Activated CD4-positive, alpha-beta T cell treated with anti-CD3 and anti-CD28 coated beads for 36 hours (primary cell): ENCODE measurements at regions of chr4 and their contacts with region 1.

Region 1: GRCh38 chr4:184514121-184514988 is 40.0 kb upstream of the IRF2 start:
- DNase-seq: peak; percentile 89
- ATAC-seq: peak; percentile 91
- H3K4me3 Mint-ChIP-seq: peak overlapping the region; percentile 51
- H3K27ac Mint-ChIP-seq: peak overlapping the region; percentile 90
- H3K4me1 Mint-ChIP-seq: peaks cover 43% of the 10 kb centered on the region
- H3K27me3 Mint-ChIP-seq: peaks cover 1% of the 10 kb centered on the region

Region 2: GRCh38 chr4:183996868-183997267 is 517.5 kb before region 1 on chr4:
- CTCF ChIA-PET with region 1: no interaction called
- POLR2A ChIA-PET with region 1: no interaction called
- intact Hi-C with region 1: no loop called
- DNase-seq: no peak
- ATAC-seq: no peak
- H3K4me3 Mint-ChIP-seq: no peak overlapping the region
- H3K27ac Mint-ChIP-seq: no peak overlapping the region
- H3K4me1 Mint-ChIP-seq: no peaks in the 10 kb centered on the region
- H3K27me3 Mint-ChIP-seq: no peaks in the 10 kb centered on the region

Region 3: GRCh38 chr4:184282251-184282713 is 232.1 kb before region 1 on chr4:
- CTCF ChIA-PET with region 1: interaction called, 6 read pairs
- POLR2A ChIA-PET with region 1: interaction called, 5 read pairs
- intact Hi-C with region 1: loop called (anchors 1 kb)
- DNase-seq: peak; percentile 82
- ATAC-seq: peak; percentile 74
- H3K4me3 Mint-ChIP-seq: peak overlapping the region; percentile 56
- H3K27ac Mint-ChIP-seq: peak overlapping the region; percentile 93
- H3K4me1 Mint-ChIP-seq: peaks cover 65% of the 10 kb centered on the region
- H3K27me3 Mint-ChIP-seq: peaks cover 4% of the 10 kb centered on the region

Region 4: DNA sequence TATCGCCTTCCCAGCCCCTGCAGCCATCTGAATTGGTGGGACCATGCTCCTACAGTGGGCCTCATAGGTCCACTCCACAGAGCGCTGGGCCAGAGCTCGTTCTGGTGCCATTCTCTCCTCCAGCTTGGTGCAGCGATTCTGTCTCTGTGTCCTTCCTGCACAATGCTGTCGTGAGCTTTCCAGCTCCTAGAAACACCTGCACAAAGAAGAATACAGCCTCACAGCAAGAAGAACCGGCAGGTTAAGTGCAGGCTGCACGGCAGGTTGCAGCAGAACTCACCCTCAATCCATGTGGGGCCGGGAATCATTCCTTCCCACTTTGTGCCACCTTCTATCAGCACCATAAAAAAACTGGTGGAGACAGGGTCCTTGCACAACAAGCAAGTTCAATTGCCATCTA is 195.5 kb before region 1 on chr4:
- CTCF ChIA-PET with region 1: no interaction called
- POLR2A ChIA-PET with region 1: no interaction called
- intact Hi-C with region 1: loop called in 1 of 2 experiments (anchors 1 kb)
- DNase-seq: no peak
- ATAC-seq: peak; percentile 8
- H3K4me3 Mint-ChIP-seq: no peak overlapping the region
- H3K27ac Mint-ChIP-seq: peak overlapping the region; percentile 59
- H3K4me1 Mint-ChIP-seq: peaks cover 35% of the 10 kb centered on the region
- H3K27me3 Mint-ChIP-seq: peaks cover 3% of the 10 kb centered on the region

Region 5: GRCh38 chr4:184457535-184458249 is 56.7 kb before region 1 on chr4:
- CTCF ChIA-PET with region 1: no interaction called
- POLR2A ChIA-PET with region 1: no interaction called
- intact Hi-C with region 1: no loop called
- DNase-seq: no peak
- ATAC-seq: no peak
- H3K4me3 Mint-ChIP-seq: no peak overlapping the region
- H3K27ac Mint-ChIP-seq: no peak overlapping the region
- H3K4me1 Mint-ChIP-seq: peaks cover 78% of the 10 kb centered on the region
- H3K27me3 Mint-ChIP-seq: no peaks in the 10 kb centered on the region

Region 6: DNA sequence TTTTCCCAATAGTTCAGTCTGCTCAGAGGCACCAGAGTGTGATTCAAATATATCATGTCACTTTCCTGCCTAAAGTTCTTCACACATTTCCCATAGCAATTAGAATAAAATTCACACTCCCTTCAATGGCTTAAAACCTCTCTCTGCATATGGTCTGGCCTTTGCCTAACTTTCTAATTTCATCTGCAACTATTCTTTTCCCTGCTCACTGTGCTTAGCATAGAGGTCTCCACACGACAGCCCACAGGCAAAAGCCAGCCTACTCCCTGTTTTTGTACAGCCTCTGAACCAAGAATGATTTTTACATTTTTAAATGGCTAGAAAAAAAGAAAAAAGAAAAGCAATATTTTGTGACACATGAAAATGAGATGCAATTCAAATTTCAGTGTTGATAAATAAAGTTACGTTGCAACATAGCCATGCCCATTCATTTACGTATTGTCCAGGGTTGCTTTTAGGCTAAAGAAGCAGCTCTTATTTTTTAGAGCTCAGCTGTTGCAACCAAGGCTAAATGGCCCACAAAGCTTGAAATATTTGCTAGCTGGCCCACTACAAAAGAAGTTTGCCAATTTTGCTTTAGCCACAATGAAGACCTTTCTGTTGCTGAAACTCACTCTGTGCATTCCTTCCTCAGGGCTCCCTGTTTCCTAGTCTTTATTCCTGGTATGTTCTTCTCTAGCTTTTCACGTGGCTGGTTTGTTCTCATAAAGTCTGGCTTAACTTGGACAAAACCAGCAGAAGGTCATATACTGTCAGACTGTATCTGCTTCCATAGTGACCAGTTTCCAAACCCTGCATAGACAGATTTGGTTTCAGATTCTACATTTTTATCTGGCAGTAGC is 13.4 kb before region 1 on chr4:
- CTCF ChIA-PET with region 1: interaction called, 14 read pairs
- POLR2A ChIA-PET with region 1: interaction called, 4 read pairs
- intact Hi-C with region 1: loop called (anchors 1 kb)
- DNase-seq: no peak
- ATAC-seq: no peak
- H3K4me3 Mint-ChIP-seq: no peak overlapping the region
- H3K27ac Mint-ChIP-seq: no peak overlapping the region
- H3K4me1 Mint-ChIP-seq: peaks cover 15% of the 10 kb centered on the region
- H3K27me3 Mint-ChIP-seq: no peaks in the 10 kb centered on the region

Region 7: DNA sequence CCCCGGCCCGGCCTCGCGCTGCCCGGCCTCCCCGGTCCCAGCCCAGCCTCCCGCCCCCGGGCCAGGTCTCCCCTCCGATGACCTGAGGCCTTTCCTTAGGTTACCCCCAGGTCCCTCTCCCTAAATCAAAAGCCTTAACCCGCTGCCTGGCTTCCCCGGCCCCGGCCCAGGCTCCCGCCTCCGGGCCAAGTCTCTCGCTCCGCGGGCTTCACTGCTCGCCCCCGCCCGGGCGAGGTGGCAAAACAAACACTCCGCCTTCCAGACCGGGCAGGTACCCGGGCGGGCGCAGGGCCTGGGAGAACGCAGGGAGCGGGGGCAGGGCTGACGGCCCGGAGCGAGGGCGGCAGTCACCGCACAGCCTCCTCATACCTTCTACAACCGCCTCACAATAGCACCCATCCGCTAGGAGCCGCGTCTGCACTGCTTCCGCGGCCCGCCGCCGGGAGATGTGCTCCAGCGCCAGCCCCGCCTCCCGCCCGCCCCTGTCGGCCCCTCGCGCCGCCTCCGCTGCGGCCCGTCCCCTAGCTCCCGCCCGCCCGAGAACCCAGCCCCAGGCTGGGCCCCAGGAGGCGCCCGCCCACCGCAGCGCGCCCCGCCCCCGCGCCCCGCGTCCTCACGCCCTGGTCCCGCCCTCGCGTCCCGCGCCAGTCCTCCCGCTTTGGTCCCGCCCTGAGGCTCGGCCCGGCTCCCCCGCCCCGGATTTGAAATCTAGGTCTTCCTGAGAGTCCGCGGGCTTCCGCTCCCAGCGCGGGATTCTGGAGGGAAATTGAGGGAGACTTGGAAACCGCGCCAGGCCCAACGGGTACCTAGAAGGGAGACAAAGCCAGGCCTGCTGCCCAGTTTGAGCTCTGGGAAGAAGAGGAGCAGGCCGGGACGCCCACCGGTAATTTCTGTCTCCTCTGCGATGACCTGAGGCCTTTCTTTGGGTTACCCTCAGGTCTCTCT is 134.9 kb after region 1 on chr4 and contains the starts of genes CASP3 and PRIMPOL:
- CTCF ChIA-PET with region 1: interaction called, 3 read pairs
- POLR2A ChIA-PET with region 1: no interaction called
- intact Hi-C with region 1: loop called in 1 of 2 experiments (anchors 1 kb)
- DNase-seq: peak; percentile 98
- ATAC-seq: peak; percentile 88
- H3K4me3 Mint-ChIP-seq: peak within 1 kb of the TSS; percentile 94
- H3K27ac Mint-ChIP-seq: peak within 1 kb of the TSS; percentile 95
- H3K4me1 Mint-ChIP-seq: peaks cover 51% of the 10 kb centered on the region
- H3K27me3 Mint-ChIP-seq: no peaks in the 10 kb centered on the region
- total RNA-seq, gene CASP3: 44.3 to 65.7 TPM
- total RNA-seq, gene PRIMPOL: 20.4 to 24.3 TPM